MCF 10A (cell line): ENCODE measurements at regions of chr1 and their contacts with region 1.

Region 1: GRCh38 chr1:201559679-201560162 is 20.8 kb downstream of the NAV1 start:
- DNase-seq: peak; percentile 89
- H3K4me3 Mint-ChIP-seq: no peak overlapping the region
- H3K27ac Mint-ChIP-seq: peak overlapping the region; percentile 35
- H3K4me1 Mint-ChIP-seq: peaks cover 48% of the 10 kb centered on the region
- H3K27me3 Mint-ChIP-seq: no peaks in the 10 kb centered on the region
- CTCF ChIP-seq: peak; percentile 100

Region 2: DNA sequence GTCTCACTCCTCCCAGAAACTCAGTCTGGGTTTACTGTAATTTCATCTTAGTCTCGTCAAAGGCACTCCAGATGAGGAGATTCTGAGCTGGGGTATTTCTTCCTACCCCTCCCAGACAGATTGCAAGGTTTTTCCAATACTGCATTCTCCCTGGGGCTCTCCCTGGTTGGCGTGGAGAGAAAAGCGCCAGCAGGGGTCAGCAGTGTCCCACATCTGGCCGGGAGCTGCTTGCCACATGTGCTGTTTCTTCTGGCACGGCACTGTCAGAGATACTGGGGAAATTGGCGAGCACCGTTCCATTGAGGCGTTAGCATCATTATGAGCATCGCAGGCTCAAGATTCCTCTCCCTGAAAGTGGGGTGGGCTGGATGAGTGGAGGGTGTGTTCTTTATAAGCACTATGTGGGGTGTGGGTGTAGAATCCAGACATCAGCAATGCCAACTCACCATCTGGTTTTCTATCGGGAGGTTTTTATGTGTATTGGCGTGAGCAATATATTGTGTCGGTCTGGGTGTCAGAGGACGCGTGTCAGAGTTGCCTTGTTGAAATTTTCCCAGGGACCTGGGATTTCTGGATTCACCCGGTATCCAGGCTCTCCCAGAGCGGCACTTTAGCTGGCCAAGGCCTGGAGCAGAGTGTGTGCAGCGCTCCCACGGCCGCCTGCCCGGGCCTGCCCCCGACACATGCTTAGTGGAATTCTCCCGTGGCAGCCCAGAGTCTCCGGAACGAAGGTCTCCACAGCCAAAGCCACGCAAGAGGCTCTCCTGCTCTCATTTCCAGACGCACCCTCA is 28.8 kb before region 1 on chr1:
- CTCF ChIA-PET with region 1: interaction called, 120 read pairs
- POLR2A ChIA-PET with region 1: interaction called, 6 read pairs
- intact Hi-C with region 1: loop called (anchors 1 kb)
- DNase-seq: peak; percentile 91
- H3K4me3 Mint-ChIP-seq: no peak overlapping the region
- H3K27ac Mint-ChIP-seq: peak overlapping the region; percentile 46
- H3K4me1 Mint-ChIP-seq: peaks cover 9% of the 10 kb centered on the region
- H3K27me3 Mint-ChIP-seq: no peaks in the 10 kb centered on the region
- CTCF ChIP-seq: peak; percentile 99

Region 3: DNA sequence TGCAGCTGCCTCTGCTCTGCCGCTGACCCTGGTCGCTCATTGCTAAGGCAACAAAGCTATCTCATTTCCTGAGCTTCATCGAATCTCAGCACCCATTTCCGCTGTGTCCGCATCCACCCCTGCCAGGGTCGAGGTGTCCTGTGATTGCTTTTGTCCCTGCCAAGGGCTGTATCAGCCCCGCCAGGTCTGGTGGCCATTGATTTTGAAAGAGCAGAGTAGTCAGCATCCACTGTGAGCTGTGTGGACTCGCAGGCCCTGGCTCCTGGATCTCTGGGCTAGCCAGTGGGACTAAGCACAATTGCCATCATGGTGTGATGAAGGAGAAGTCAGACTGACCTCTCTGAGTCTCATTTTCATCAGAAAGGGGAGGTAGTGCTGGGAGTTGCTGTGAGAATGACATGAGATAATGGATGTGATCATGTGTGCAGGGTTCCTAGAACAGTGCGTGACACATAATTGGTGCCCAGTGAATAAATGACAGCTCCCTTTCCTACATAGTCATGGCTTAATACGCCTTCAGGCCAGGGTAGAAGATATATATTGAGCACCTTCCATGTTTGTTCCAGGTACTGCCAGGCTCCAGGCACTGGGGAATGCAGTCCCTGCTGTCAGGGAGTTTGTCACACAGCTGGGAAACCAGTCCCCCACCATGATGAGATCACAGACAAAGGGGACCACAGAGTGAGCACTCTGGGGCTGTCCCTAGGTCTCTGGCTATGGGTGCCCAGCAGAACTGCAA is 11.3 kb after region 1 on chr1:
- CTCF ChIA-PET with region 1: interaction called, 42 read pairs
- POLR2A ChIA-PET with region 1: interaction called, 3 read pairs
- intact Hi-C with region 1: no loop called
- DNase-seq: no peak
- H3K4me3 Mint-ChIP-seq: no peak overlapping the region
- H3K27ac Mint-ChIP-seq: no peak overlapping the region
- H3K4me1 Mint-ChIP-seq: peaks cover 5% of the 10 kb centered on the region
- H3K27me3 Mint-ChIP-seq: no peaks in the 10 kb centered on the region
- CTCF ChIP-seq: no peak

Region 4: DNA sequence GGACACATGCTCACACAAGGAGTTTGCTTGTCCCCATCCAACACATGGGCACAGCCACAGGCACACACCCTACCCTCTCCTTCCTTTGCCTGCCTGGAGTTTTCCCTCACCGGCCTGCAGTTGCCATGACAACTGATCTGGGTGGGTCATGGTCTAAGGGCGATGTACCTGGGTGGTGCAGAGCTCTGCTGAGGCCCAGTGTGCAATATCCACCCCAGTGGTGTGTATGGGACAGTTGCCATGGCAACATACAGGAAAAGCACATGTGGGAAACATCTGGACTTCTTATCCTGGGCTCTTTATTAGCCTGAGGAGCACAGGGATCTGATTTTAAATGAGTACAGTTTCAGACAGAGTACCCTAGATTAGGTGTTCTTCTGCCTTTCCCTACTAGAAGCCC is 78.0 kb after region 1 on chr1:
- CTCF ChIA-PET with region 1: interaction called, 10 read pairs
- POLR2A ChIA-PET with region 1: interaction called, 4 read pairs
- intact Hi-C with region 1: no loop called
- DNase-seq: no peak
- H3K4me3 Mint-ChIP-seq: no peak overlapping the region
- H3K27ac Mint-ChIP-seq: no peak overlapping the region
- H3K4me1 Mint-ChIP-seq: peaks cover 5% of the 10 kb centered on the region
- H3K27me3 Mint-ChIP-seq: peaks cover 13% of the 10 kb centered on the region
- CTCF ChIP-seq: no peak

Region 5: GRCh38 chr1:201686714-201687455 is 127.2 kb after region 1 on chr1:
- CTCF ChIA-PET with region 1: interaction called, 83 read pairs
- POLR2A ChIA-PET with region 1: no interaction called
- intact Hi-C with region 1: no loop called
- DNase-seq: peak; percentile 64
- H3K4me3 Mint-ChIP-seq: no peak overlapping the region
- H3K27ac Mint-ChIP-seq: peak overlapping the region; percentile 17
- H3K4me1 Mint-ChIP-seq: peaks cover 13% of the 10 kb centered on the region
- H3K27me3 Mint-ChIP-seq: no peaks in the 10 kb centered on the region
- CTCF ChIP-seq: no peak

Region 6: DNA sequence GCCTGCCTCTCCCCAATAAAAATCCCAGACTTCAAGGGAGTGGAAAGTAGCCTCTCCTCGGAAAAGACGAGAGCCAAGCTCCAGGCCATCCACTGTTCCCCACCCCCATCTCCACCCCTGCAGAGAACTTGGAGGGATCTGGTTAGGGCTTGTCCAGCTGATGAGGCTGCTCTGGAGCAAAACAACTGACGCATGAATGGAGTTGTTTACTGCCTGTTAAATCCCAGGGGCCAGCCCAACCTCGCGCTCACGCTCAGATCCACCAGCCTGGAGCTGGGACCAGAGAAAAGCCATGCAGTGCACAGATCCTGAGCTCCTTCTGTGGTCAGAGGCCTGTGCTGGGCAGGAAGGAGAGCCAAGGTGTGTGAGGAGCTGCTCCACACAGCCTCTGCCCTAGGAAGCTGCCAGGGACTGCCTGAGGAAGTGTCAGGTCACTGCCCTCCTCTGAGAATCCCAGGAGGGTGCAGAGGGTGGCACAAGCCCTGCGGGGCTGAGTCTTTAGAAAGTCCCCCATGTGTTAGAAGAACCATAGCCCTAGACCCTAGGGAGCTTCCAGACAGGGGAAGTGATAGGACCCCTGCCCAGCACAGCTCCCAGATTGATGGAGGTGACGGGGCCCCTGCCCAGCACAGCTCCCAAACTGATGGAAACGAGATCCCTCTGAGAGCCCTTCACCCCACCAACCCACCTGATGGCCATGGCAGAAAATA is 160.2 kb after region 1 on chr1:
- CTCF ChIA-PET with region 1: interaction called, 779 read pairs
- POLR2A ChIA-PET with region 1: no interaction called
- intact Hi-C with region 1: no loop called
- DNase-seq: no peak
- H3K4me3 Mint-ChIP-seq: no peak overlapping the region
- H3K27ac Mint-ChIP-seq: peak overlapping the region; percentile 52
- H3K4me1 Mint-ChIP-seq: peaks cover 23% of the 10 kb centered on the region
- H3K27me3 Mint-ChIP-seq: no peaks in the 10 kb centered on the region
- CTCF ChIP-seq: no peak

Region 7: GRCh38 chr1:201807958-201808632 is 248.4 kb after region 1 on chr1:
- CTCF ChIA-PET with region 1: interaction called, 22 read pairs
- POLR2A ChIA-PET with region 1: no interaction called
- intact Hi-C with region 1: no loop called
- DNase-seq: no peak
- H3K4me3 Mint-ChIP-seq: no peak overlapping the region
- H3K27ac Mint-ChIP-seq: no peak overlapping the region
- H3K4me1 Mint-ChIP-seq: no peaks in the 10 kb centered on the region
- H3K27me3 Mint-ChIP-seq: no peaks in the 10 kb centered on the region
- CTCF ChIP-seq: no peak